Endothelial cell of umbilical vein (primary cell): ENCODE measurements at regions of chr18 and their contacts with region 1.

Region 1: DNA sequence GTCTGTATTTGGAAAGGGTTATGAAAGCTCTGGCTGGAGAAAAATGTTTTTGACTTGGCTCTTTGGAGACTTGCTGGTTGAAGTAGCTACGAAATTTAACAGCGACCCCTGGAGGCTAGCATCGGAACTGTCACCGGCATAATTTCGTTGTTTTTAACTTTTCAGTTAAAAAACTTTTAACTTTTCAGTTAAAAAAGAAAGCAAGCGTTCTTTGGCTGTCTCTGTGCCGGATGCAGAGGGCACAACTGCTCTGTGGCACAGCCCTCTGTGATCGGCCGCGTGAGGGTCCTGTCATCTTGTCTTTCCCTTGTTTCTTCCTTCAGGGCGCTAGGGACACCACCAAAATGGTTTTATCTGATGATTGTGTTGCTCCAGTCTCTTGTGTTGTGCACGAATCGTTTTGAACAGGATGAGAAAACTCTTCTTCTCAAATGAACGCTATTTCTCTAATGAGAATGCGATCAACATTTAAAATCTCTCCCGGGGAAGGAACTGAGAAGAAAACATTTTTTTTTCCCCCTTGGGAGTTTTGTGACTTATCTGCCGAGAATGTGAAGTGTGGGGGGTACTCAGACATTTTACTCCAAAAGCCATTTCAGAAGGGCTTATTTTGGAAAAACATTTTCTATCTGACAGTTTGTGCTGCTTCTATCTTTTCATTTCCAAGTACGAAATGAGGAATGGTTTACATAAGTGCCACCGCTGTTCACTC is 57.1 kb downstream of the ADCYAP1 start:
- DNase-seq: peak; percentile 77
- H3K4me3 ChIP-seq: peak overlapping the region in 2 of 3 experiments; percentile 38 to 52
- H3K27ac ChIP-seq: no peak overlapping the region
- H3K4me1 ChIP-seq: no peaks in the 10 kb centered on the region
- H3K27me3 ChIP-seq: peaks cover 3 to 10% of the 10 kb centered on the region in 2 experiments
- CTCF ChIP-seq: peak; percentile 81 to 93
- POLR2A ChIP-seq: no peak

Region 2: GRCh38 chr18:681985-682384 is 279.8 kb before region 1 on chr18:
- CTCF ChIA-PET with region 1: no interaction called
- POLR2A ChIA-PET with region 1: no interaction called
- dilution Hi-C with region 1: no loop called
- intact Hi-C with region 1: no loop called
- DNase-seq: no peak
- H3K4me3 ChIP-seq: no peak overlapping the region
- H3K27ac ChIP-seq: no peak overlapping the region
- H3K4me1 ChIP-seq: no peaks in the 10 kb centered on the region
- H3K27me3 ChIP-seq: no peaks in the 10 kb centered on the region
- CTCF ChIP-seq: no peak
- POLR2A ChIP-seq: no peak

Region 3: GRCh38 chr18:725646-726045 is 236.2 kb before region 1 on chr18:
- CTCF ChIA-PET with region 1: no interaction called
- POLR2A ChIA-PET with region 1: no interaction called
- dilution Hi-C with region 1: no loop called
- intact Hi-C with region 1: no loop called
- DNase-seq: no peak
- H3K4me3 ChIP-seq: no peak overlapping the region
- H3K27ac ChIP-seq: no peak overlapping the region
- H3K4me1 ChIP-seq: peaks cover 4% of the 10 kb centered on the region
- H3K27me3 ChIP-seq: no peaks in the 10 kb centered on the region
- CTCF ChIP-seq: no peak
- POLR2A ChIP-seq: no peak

Region 4: GRCh38 chr18:903701-904100 is 58.1 kb before region 1 on chr18:
- CTCF ChIA-PET with region 1: interaction called, 7 read pairs
- POLR2A ChIA-PET with region 1: no interaction called
- dilution Hi-C with region 1: no loop called
- intact Hi-C with region 1: loop called (anchors 5 kb)
- DNase-seq: peak; percentile 42
- H3K4me3 ChIP-seq: no peak overlapping the region
- H3K27ac ChIP-seq: no peak overlapping the region
- H3K4me1 ChIP-seq: peaks cover 7% of the 10 kb centered on the region
- H3K27me3 ChIP-seq: peaks cover 51 to 72% of the 10 kb centered on the region in 2 experiments
- CTCF ChIP-seq: no peak
- POLR2A ChIP-seq: no peak

Region 5: DNA sequence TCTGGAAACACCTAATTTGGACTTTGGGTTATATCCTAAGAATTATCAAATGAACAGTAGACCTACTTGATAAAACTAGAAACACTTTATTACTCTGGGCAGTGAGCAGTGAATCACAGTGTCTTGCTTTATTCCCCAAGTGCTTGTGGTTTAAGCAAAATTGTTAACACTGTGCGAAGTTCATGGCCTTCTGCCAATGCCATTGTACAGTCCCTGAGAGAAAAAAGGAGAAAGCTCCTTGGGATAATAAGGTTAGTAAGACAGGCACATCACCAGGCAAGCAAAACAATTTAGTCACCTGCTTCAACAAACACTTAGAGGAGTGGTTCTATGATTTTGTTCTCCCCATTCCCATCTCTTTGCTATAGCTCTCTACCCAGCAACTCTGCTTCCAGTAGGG is 17.4 kb before region 1 on chr18:
- CTCF ChIA-PET with region 1: interaction called, 28 read pairs
- POLR2A ChIA-PET with region 1: no interaction called
- dilution Hi-C with region 1: no loop called
- intact Hi-C with region 1: no loop called
- DNase-seq: no peak
- H3K4me3 ChIP-seq: no peak overlapping the region
- H3K27ac ChIP-seq: no peak overlapping the region
- H3K4me1 ChIP-seq: no peaks in the 10 kb centered on the region
- H3K27me3 ChIP-seq: peaks cover 0 to 2% of the 10 kb centered on the region in 2 experiments
- CTCF ChIP-seq: no peak
- POLR2A ChIP-seq: no peak

Region 6: DNA sequence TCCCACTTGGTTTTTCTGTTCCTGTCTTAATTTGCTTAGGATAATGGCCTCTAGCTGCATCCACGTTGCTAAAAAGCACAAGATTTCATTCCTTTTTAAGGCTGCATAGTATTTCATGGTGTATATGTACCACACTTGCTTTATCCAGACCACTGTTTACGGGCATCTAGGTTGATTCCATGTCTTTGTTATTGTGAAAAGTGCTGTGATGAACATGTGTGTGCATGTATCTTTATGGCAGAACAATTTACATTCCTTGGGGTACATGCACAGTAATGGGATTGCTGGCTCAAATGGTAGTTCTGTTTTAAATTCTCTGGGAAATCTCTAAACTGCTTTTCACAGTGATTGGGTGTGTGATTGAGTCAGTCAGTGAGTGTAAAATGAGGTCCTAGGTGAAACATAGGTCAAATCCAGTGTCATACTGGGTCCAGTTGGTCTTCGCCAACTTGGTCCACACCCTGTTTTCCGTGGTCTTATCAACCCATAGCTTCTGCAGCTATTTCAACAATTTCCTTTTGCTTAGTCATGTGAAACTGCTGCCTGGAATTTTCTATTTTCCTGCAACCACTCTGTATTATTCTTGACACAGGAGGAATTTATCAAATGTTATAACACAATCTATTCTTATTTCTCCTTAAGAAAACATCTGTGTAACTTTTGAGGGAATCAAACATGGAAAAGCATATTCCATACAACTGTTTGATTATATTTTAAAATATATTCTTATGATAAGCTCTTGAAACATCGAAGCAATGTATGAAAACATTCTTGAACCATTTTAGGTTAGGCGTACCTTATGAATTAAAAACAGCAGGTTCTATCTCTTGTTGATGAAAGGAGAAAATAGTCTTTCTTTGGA is 25.8 kb after region 1 on chr18:
- CTCF ChIA-PET with region 1: interaction called, 21 read pairs
- POLR2A ChIA-PET with region 1: no interaction called
- dilution Hi-C with region 1: no loop called
- intact Hi-C with region 1: no loop called
- DNase-seq: peak; percentile 90
- H3K4me3 ChIP-seq: no peak overlapping the region
- H3K27ac ChIP-seq: peak overlapping the region; percentile 65
- H3K4me1 ChIP-seq: peaks cover 23% of the 10 kb centered on the region
- H3K27me3 ChIP-seq: no peaks in the 10 kb centered on the region
- CTCF ChIP-seq: no peak
- POLR2A ChIP-seq: peak; percentile 34

Region 7: GRCh38 chr18:1018181-1018681 is 56.4 kb after region 1 on chr18:
- CTCF ChIA-PET with region 1: interaction called, 13 read pairs
- POLR2A ChIA-PET with region 1: no interaction called
- dilution Hi-C with region 1: no loop called
- intact Hi-C with region 1: no loop called
- DNase-seq: no peak
- H3K4me3 ChIP-seq: no peak overlapping the region
- H3K27ac ChIP-seq: no peak overlapping the region
- H3K4me1 ChIP-seq: no peaks in the 10 kb centered on the region
- H3K27me3 ChIP-seq: no peaks in the 10 kb centered on the region
- CTCF ChIP-seq: no peak
- POLR2A ChIP-seq: no peak

Region 8: GRCh38 chr18:1048032-1048431 is 86.2 kb after region 1 on chr18:
- CTCF ChIA-PET with region 1: no interaction called
- POLR2A ChIA-PET with region 1: no interaction called
- dilution Hi-C with region 1: no loop called
- intact Hi-C with region 1: no loop called
- DNase-seq: peak; percentile 53
- H3K4me3 ChIP-seq: no peak overlapping the region
- H3K27ac ChIP-seq: no peak overlapping the region
- H3K4me1 ChIP-seq: peaks cover 7% of the 10 kb centered on the region
- H3K27me3 ChIP-seq: no peaks in the 10 kb centered on the region
- CTCF ChIP-seq: no peak
- POLR2A ChIP-seq: no peak

Region 9: DNA sequence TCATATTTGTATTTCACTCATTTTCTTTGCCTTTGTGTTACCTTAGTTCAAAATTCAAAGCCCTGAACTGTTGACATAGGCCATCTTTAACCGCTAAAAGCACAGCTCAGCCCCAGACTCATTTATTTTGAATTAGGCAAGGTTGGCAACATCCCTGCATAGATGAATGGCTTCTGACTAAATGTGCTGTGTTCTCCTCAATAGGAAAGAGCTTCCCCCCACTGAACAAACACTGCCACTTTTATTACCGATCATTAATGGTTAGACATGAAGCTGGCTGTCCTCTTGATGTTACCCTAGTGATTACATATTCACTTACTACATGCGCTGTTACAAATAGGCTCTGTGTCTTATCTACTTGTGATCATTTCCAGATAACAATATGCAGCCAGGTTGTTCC is 113.5 kb after region 1 on chr18:
- CTCF ChIA-PET with region 1: interaction called, 10 read pairs
- POLR2A ChIA-PET with region 1: no interaction called
- dilution Hi-C with region 1: no loop called
- intact Hi-C with region 1: no loop called
- DNase-seq: no peak
- H3K4me3 ChIP-seq: no peak overlapping the region
- H3K27ac ChIP-seq: no peak overlapping the region
- H3K4me1 ChIP-seq: no peaks in the 10 kb centered on the region
- H3K27me3 ChIP-seq: peaks cover under 1 to 3% of the 10 kb centered on the region in 2 experiments
- CTCF ChIP-seq: no peak
- POLR2A ChIP-seq: no peak